Right ventricle myocardium inferior (tissue), 1 donor: ENCODE measurements at regions of chr5 and their contacts with region 1.

Region 1: GRCh38 chr5:16558984-16559629 is 57.7 kb downstream of the RETREG1 start:
- DNase-seq: no peak
- ATAC-seq: no peak

Region 2: GRCh38 chr5:16666883-16667398 is 107.8 kb after region 1 on chr5:
- intact Hi-C with region 1: loop called (anchors 5 kb)
- DNase-seq: peak; percentile 77
- ATAC-seq: peak; percentile 87